ENCODE measurements at regions of chr2 and their contacts with region 1.

Region 1: GRCh38 chr2:172465417-172466334 is 38.3 kb downstream of the ITGA6 start:
- DNase-seq: peak; percentile 79
- H3K4me3 ChIP-seq: peak overlapping the region; percentile 22
- H3K4me3 Mint-ChIP-seq: peak overlapping the region; percentile 74
- H3K27ac Mint-ChIP-seq: peak overlapping the region; percentile 65
- H3K4me1 ChIP-seq: peaks cover 10% of the 10 kb centered on the region
- H3K4me1 Mint-ChIP-seq: peaks cover 37% of the 10 kb centered on the region
- H3K27me3 ChIP-seq: no peaks in the 10 kb centered on the region
- H3K27me3 Mint-ChIP-seq: no peaks in the 10 kb centered on the region
- CTCF ChIP-seq: peak; percentile 87 to 89

Region 2: GRCh38 chr2:171811245-171811628 is 654.4 kb before region 1 on chr2:
- CTCF ChIA-PET with region 1: no interaction called
- POLR2A ChIA-PET with region 1: no interaction called
- intact Hi-C with region 1: loop called (anchors 1 kb)
- DNase-seq: peak in 1 of 2 experiments; percentile 26
- H3K4me3 ChIP-seq: no peak overlapping the region
- H3K4me3 Mint-ChIP-seq: no peak overlapping the region
- H3K27ac Mint-ChIP-seq: no peak overlapping the region
- H3K4me1 ChIP-seq: peaks cover 4% of the 10 kb centered on the region
- H3K4me1 Mint-ChIP-seq: no peaks in the 10 kb centered on the region
- H3K27me3 ChIP-seq: no peaks in the 10 kb centered on the region
- H3K27me3 Mint-ChIP-seq: no peaks in the 10 kb centered on the region
- CTCF ChIP-seq: peak; percentile 34 to 41

Region 3: DNA sequence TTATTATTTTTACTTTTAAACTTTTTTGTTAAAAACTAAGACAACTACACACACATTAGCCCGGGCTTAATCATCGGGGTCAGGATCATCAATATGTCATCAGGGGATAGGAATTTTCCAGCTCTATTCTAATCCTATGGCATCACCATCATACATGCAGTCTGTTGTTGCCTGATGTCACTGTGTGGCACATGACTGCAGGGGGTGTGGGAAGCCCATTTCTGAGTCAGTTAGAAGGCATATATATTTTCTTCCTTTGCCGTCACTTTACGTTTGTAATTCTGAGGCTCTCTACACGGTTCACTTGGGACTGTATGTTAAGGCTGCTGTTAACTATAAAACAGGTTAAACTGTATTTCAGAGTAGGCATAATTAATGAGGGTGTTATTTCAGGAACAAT is 182.7 kb before region 1 on chr2:
- CTCF ChIA-PET with region 1: interaction called, 4 read pairs
- POLR2A ChIA-PET with region 1: no interaction called
- intact Hi-C with region 1: loop called (anchors 5 kb)
- DNase-seq: no peak
- H3K4me3 ChIP-seq: no peak overlapping the region
- H3K4me3 Mint-ChIP-seq: no peak overlapping the region
- H3K27ac Mint-ChIP-seq: no peak overlapping the region
- H3K4me1 ChIP-seq: 0 out of 2 replicates have a peak, but pooled peaks cover 5% of the 10 kb centered on the region
- H3K4me1 Mint-ChIP-seq: no peaks in the 10 kb centered on the region
- H3K27me3 ChIP-seq: no peaks in the 10 kb centered on the region
- H3K27me3 Mint-ChIP-seq: no peaks in the 10 kb centered on the region
- CTCF ChIP-seq: no peak

Region 4: GRCh38 chr2:172427256-172427989 is 38.3 kb before region 1 on chr2 and contains the start of gene ITGA6:
- CTCF ChIA-PET with region 1: interaction called, 80 read pairs
- POLR2A ChIA-PET with region 1: interaction called, 9 read pairs
- intact Hi-C with region 1: loop called (anchors 1 kb)
- DNase-seq: peak; percentile 90
- H3K4me3 ChIP-seq: peak within 1 kb of the TSS; percentile 90
- H3K4me3 Mint-ChIP-seq: peak within 1 kb of the TSS; percentile 70
- H3K27ac Mint-ChIP-seq: peak within 1 kb of the TSS; percentile 84
- H3K4me1 ChIP-seq: peaks cover 25% of the 10 kb centered on the region
- H3K4me1 Mint-ChIP-seq: no peaks in the 10 kb centered on the region
- H3K27me3 ChIP-seq: no peaks in the 10 kb centered on the region
- H3K27me3 Mint-ChIP-seq: no peaks in the 10 kb centered on the region
- CTCF ChIP-seq: peak in 1 of 2 experiments; percentile 17
- total RNA-seq, gene ITGA6: 27.8 and 33.0 TPM in 2 replicates

Region 5: DNA sequence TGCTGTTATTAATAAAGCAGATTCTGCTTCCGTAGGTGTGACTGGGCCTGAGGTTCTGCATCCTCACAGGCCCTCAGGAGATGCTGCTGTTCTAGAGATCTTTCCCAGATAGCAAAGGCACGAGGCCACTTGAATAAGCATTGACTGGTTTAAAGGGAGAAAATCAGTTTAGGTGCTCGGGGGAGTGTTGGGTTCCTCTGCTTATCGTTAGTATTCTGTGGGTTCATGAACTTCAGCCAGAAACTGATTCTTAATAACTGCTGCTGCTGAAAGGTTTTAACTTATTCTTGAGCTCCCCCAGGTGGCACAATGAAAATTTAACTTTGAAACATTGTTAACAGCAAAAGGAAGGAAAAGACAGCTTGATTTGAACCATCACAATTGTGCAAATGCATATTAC is 18.6 kb after region 1 on chr2:
- CTCF ChIA-PET with region 1: interaction called, 5 read pairs
- POLR2A ChIA-PET with region 1: no interaction called
- intact Hi-C with region 1: loop called (anchors 1 kb)
- DNase-seq: peak in 1 of 2 experiments; percentile 29
- H3K4me3 ChIP-seq: no peak overlapping the region
- H3K4me3 Mint-ChIP-seq: no peak overlapping the region
- H3K27ac Mint-ChIP-seq: no peak overlapping the region
- H3K4me1 ChIP-seq: no peaks in the 10 kb centered on the region
- H3K4me1 Mint-ChIP-seq: peaks cover 6% of the 10 kb centered on the region
- H3K27me3 ChIP-seq: no peaks in the 10 kb centered on the region
- H3K27me3 Mint-ChIP-seq: no peaks in the 10 kb centered on the region
- CTCF ChIP-seq: peak; percentile 28 to 31